Naive thymus-derived CD4-positive, alpha-beta T cell (primary cell): ENCODE measurements at regions of chr6 and their contacts with region 1.

Region 1: DNA sequence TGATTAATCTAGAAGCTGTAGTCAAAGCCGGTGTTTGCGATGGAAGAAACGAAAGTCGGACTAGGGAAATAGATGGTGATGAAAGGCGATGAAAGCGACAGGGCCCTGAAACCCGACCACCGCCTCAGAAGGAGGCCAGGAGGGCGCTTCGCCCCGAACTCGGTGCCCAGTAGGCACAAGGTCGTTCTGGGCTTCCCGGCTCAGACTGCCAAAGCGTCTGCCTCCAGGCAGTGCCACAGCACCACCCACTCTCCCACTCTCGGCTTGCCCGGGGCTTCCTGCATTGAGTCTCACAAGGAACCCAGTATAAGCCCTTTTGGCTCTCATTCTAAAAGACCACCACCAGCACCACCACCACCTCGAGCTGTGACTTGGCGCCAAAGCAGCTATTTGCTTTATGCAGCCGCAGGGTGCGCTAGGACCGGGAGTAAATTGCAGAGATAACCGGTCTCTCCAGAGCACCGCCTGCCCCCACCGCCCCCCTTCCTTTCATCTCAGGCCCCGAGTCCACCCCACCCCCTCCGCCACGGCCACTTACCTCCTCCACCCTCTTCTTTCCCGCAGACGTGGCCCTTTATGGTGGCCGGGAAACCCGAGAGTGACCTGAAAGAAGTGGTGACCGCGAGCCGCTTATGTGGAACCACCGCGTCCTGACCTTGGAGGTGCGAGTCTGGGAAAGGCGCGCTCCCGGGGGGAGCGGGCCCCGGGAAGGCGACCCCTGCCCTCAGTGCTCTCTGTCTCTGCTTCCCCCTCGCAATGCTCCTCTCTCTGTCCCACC is 2.4 kb downstream of the TCF21 start:
- DNase-seq: peak in 1 of 9 donors; percentile 3
- ATAC-seq: peak; percentile 26
- H3K4me3 ChIP-seq: peak overlapping the region; percentile 55
- H3K4me3 Mint-ChIP-seq: peak overlapping the region; percentile 54 to 88 (median 80)
- H3K27ac ChIP-seq: no peak overlapping the region
- H3K27ac Mint-ChIP-seq: no peak overlapping the region
- H3K4me1 ChIP-seq: peaks cover 9 to 13% of the 10 kb centered on the region in 2 donors
- H3K4me1 Mint-ChIP-seq: peaks cover 17 to 60% (median 44%) of the 10 kb centered on the region in 7 donors
- H3K27me3 ChIP-seq: peaks cover 14 to 44% of the 10 kb centered on the region in 2 donors
- H3K27me3 Mint-ChIP-seq: peaks cover 86 to 94% (median 91%) of the 10 kb centered on the region in 5 donors

Region 2: DNA sequence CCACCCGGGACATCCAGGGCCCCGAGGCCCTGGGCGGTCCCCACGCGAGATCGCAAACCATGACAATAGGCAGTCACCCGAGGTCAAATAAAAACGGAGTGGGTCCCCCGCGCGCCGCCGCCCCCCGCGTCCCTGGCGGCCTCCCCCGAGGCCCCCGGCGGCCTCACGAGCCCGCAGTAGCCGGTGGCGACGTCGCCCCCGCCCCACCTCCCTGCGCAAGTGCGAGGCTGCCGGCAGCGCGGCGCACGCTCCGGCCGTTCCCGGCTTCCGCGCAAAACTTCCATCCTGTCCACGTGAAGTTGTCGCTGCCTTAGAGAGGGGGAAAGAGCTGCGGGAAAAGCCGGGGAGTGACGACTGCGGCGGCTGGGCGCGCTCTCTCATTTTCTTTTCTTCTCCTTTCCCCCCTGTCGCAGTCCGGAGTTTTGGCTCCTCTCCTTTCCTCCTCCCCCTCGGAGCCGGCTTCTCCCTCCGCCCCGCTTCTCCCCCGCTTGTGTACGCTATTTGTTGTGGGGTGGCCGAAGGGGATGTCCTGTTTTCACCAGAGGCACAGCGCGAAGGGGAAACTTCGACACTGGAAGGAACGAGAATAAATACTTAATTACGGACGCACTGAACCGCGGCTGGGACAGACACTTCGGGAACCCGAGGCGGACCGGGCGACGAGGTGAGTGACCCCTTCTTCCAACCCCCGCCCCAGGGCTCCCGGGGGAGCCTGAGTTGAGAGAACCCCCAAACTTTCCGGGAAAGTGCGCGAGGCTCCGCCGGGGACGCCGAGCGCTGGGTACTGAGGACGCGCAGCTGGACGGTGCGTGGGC is 650.0 kb before region 1 on chr6 and contains the start of gene EYA4:
- CTCF ChIA-PET with region 1: no interaction called
- POLR2A ChIA-PET with region 1: no interaction called
- intact Hi-C with region 1: loop called in 1 of 2 experiments (anchors 5 kb)
- DNase-seq: no peak
- ATAC-seq: no peak
- H3K4me3 ChIP-seq: no peak within 1 kb of the TSS
- H3K4me3 Mint-ChIP-seq: peak within 1 kb of the TSS in 5 of 10 donors; percentile 8 to 65 (median 19)
- H3K27ac ChIP-seq: no peak within 1 kb of the TSS
- H3K27ac Mint-ChIP-seq: peak within 1 kb of the TSS in 1 of 9 donors; percentile 42
- H3K4me1 ChIP-seq: no peaks in the 10 kb centered on the region
- H3K4me1 Mint-ChIP-seq: peaks cover 3 to 19% (median 7%) of the 10 kb centered on the region in 7 donors
- H3K27me3 ChIP-seq: peaks cover 0 to 3% of the 10 kb centered on the region in 2 donors
- H3K27me3 Mint-ChIP-seq: peaks cover 43 to 74% (median 51%) of the 10 kb centered on the region in 5 donors
- total RNA-seq, gene EYA4: not detected

Region 3: DNA sequence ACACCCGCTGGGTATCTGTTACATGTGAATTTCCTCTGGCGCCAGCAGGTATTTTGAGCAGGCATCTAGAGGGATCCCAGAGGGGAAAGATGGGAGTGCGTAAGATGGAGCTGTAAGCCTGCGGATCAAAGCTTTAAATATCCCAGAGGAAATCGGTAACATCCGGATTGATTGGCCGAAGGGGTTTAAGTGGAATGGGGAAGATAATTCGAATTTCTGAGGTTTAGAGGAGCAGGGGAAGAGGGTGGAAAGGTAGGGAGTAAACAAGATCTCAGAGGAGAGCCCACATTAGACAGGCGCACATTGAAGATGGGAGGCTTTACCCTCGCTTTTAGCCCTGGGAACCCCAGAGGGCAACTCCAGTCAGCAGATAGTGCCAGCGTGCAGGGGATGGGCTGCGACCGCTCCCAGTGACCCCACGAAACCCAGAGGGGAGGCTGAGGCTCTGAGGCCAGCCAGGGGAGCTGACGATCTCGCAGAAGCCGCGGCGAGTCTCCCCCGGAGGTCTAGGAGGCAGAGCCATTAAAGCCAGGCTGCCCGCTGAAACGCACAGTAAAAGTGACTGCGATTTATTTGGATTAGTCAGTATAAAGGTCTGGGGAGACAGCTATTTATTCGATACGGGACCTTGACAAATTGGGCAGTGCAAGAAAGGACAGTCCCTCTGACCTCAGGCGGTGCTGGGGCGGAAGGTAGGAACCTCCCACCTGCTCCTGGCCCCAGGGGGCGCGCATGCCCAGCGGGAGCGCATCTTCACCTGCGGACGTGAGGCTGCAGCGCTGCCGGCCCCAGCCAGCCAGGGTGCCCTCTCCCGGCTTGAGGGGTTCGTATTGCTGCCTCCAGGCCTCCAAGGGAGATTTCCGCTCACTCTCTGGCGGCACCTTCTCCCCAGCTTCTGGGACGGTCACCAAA is 36.7 kb before region 1 on chr6:
- CTCF ChIA-PET with region 1: interaction called, 3 read pairs
- POLR2A ChIA-PET with region 1: no interaction called
- intact Hi-C with region 1: loop called in 1 of 2 experiments (anchors 1 kb)
- DNase-seq: no peak
- ATAC-seq: no peak
- H3K4me3 ChIP-seq: no peak overlapping the region
- H3K4me3 Mint-ChIP-seq: peak overlapping the region in 3 of 10 donors; percentile 25 to 33 (median 30)
- H3K27ac ChIP-seq: no peak overlapping the region
- H3K27ac Mint-ChIP-seq: no peak overlapping the region
- H3K4me1 ChIP-seq: no peaks in the 10 kb centered on the region
- H3K4me1 Mint-ChIP-seq: peaks cover 4 to 21% (median 11%) of the 10 kb centered on the region in 7 donors
- H3K27me3 ChIP-seq: peaks cover 5 to 10% of the 10 kb centered on the region in 2 donors
- H3K27me3 Mint-ChIP-seq: peaks cover 68 to 88% (median 77%) of the 10 kb centered on the region in 5 donors